ENCODE measurements at regions of chr1 and their contacts with region 1.

Region 1: DNA sequence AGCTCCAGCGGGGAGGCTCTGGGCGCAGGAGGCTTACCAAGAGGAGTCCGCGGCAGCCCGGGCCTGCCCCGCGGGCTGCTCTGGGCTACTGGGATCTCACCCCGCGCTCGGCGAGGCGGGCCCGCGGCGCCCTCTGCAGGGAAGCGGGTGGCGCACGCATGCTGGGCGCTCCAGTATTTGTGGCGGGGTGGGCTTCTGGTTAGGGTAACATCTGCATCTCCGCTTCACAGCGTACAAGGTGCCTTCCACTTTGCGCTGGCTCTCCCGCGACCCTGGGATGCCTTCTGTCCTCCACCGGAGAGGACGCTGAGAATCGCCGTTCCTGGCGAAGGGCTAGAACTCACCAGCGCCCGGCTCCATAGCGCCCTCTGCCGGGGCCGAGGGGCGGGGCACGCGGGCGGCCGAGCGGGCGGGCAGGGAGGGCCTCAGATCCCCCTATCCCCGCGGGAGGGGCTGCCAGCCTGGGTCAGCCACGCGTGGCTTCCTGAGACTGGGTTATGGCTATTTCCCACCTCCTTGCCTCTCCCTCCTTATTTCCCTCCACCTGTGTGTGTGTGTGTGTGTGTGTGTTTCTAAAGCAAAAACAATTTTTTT is 46.6 kb upstream of the CTBS start:
- DNase-seq: peak; percentile 89

Region 2: DNA sequence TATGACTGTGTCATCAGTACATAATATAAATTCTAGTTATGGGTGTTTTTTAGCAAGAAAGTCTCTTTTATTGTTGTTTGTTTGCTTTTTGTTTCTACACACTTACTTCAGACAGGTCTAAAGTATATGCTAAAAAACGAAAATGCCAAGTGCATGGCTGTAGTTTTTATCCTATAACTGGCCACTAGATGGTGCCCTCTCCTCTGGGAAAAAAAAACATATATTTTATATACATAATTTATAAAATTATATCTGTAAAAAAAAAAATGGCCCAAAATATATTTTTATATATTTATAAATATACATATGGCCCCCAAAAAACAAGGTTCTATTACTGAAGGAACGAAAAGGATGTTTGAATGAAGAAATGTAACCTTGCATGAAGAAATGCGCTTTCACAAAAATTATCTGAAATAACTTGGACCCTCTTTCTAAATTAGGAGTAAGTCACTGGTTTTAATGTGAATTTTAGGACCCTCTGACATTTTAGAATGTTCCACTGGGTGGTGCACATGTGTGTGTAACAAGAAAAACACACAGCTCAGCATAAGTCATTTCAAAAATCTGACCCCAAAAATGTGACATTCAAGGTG is 715.4 kb before region 1 on chr1:
- in situ Hi-C with region 1: loop called (anchors 25 kb)
- DNase-seq: peak; percentile 47

Region 3: GRCh38 chr1:84143796-84144565 is 476.8 kb before region 1 on chr1 and contains the start of gene PRKACB:
- in situ Hi-C with region 1: loop called (anchors 25 kb)
- DNase-seq: peak; percentile 84

Region 4: DNA sequence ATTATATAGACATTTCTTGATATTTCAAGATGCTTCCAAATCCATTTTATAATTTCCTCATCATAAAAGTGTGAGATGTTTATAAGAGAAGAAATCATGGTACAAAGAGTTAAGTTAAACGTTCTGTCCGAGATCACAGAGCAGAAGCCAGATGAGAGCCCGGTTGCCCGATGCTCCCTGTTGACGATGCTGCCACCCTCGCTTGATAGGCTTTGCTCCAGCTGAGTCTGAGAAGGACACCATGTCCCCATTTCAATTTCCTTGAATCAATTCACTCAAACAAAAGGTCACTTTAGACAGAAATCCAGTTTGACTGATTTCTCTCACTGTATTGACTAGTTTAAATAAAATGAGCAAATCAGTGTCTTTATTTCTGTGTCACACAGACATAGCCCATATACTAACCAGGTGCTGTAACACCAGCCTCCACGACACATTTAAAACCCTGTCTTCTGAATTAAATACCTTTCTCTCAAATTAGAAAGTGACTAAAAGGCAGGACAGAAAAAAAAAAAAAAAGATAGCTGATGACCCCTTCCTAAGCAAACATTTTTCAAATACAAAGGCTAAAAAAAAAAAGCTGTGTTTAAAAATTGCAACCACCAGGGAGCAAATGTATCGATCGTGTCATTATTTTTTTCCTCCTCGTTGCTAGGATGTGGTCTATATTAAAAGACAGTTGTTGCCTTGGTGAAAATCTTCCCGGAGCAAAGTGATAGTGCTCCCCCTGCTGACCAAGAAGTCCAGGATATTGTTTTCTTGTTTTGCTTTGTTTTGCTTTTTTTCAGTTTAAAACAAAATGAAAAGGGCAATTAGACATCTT is 187.3 kb before region 1 on chr1:
- in situ Hi-C with region 1: loop called (anchors 25 kb)
- DNase-seq: peak; percentile 85

Region 5: GRCh38 chr1:84712276-84712874 is 91.6 kb after region 1 on chr1:
- in situ Hi-C with region 1: no loop called
- DNase-seq: no peak

Region 6: DNA sequence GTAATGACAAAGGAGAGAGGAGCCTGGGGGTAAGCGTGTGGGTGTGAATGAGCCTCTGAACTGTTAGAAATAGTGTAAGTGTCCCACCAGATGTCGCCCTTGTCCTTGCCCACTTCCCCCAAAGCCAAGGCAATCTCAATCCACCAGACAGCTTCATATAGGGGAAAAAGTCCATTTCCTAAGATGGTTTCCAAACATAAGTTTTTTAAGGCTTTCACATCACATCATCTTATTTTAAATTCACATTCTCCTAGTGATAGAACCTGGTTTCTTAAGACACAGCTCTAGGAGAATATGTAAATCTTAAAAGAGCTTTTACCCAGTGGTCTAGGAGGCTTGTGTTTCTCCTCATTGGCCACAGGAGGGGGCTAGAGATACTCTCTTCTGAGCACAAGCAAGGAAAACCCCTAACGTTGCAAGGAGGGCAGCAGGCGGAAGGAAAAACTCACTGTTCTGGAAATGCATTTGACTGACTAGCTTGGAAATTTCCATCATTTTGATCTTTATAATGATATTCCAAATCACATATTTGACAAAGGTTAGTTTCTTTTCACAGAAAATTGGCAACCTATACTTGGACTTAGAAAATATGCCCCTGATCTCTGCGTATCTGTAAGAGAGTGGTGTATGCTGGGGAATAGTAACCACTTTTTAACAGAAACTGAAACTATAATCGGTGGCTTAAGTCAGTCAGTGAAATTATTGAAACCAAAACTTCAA is 324.1 kb after region 1 on chr1:
- in situ Hi-C with region 1: loop called (anchors 25 kb)
- DNase-seq: peak; percentile 82